ENCODE measurements at regions of chr3 and their contacts with region 1.

Region 1: GRCh38 chr3:170414202-170414663 is 4.4 kb upstream of the CLDN11 start:
- DNase-seq: peak; percentile 82
- H3K4me3 ChIP-seq: no peak overlapping the region
- H3K27ac ChIP-seq: no peak overlapping the region
- H3K27me3 ChIP-seq: no peaks in the 10 kb centered on the region
- CTCF ChIP-seq: peak; percentile 100

Region 2: GRCh38 chr3:169792359-169792758 is 621.9 kb before region 1 on chr3:
- CTCF ChIA-PET with region 1: interaction called, 10 read pairs
- POLR2A ChIA-PET with region 1: no interaction called
- DNase-seq: no peak
- H3K4me3 ChIP-seq: no peak overlapping the region
- H3K27ac ChIP-seq: no peak overlapping the region
- H3K27me3 ChIP-seq: no peaks in the 10 kb centered on the region
- CTCF ChIP-seq: no peak

Region 3: DNA sequence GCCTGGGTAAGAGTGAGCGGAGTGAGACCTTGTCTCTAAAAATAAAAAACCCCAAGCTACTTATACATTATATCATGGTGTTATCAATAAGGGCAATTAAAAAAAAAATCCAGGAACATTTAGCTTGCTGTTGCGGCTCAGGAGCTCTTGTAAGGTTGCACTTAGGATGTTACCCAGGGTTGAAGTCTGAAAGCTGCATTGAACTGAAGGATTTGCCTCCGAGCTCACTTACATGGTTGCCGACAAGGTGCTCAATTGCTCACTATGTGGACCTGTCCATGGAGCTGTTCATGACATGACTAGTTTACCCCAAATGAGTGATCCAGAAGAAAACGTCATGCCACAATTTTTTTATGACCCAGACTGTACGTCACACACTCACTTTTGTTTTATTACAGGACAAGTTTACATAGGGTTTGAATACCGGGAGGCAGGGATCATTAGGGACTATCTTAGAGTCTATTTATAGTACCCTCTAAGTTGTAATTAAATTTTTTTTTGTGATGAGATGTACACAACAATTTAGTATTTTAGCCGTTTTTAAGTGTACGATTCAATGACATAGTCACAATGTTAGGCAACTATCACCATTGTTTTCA is 16.6 kb before region 1 on chr3:
- CTCF ChIA-PET with region 1: interaction called, 10 read pairs
- POLR2A ChIA-PET with region 1: no interaction called
- DNase-seq: no peak
- H3K4me3 ChIP-seq: no peak overlapping the region
- H3K27ac ChIP-seq: no peak overlapping the region
- H3K27me3 ChIP-seq: no peaks in the 10 kb centered on the region
- CTCF ChIP-seq: no peak

Region 4: DNA sequence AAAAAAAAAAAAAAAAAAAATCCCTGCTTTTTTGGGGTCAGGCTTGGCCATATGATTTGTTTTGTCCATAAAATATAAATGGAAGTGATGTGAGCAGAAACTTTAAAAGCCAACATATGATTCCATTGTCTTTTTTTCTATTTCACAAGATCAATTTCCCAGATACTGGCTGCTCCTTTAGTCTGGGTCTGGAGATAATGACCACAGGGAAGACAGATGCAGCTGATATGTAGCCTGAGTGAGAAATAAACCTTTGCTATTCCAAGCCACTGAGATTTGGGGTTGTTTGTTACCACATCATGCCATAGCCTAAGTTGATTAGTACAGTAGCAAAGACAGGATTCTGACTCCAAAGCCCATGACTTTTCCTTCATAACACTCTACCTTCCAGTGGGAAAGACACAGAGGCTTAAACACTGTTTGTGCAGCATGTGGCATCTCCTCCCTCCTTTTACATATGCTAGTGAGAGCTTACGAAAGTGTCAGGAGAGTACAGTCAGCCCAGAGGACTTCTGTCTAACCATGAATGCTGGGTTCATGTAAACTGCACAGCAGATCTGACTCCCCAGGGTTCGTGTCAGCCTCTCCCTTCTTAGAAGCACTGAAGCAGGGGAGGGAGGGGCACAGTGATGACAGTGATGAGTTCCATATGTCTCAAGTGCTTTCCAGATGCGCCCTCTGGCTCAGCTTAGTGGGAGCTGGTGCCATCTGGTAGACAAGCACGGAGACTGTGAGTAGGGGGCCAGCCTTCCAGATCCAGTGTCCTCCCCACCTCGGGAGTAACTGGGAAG is 208.3 kb after region 1 on chr3:
- CTCF ChIA-PET with region 1: interaction called, 11 read pairs
- POLR2A ChIA-PET with region 1: interaction called, 4 read pairs
- DNase-seq: peak; percentile 98
- H3K4me3 ChIP-seq: no peak overlapping the region
- H3K27ac ChIP-seq: peak overlapping the region; percentile 86
- H3K27me3 ChIP-seq: no peaks in the 10 kb centered on the region
- CTCF ChIP-seq: no peak

Region 5: DNA sequence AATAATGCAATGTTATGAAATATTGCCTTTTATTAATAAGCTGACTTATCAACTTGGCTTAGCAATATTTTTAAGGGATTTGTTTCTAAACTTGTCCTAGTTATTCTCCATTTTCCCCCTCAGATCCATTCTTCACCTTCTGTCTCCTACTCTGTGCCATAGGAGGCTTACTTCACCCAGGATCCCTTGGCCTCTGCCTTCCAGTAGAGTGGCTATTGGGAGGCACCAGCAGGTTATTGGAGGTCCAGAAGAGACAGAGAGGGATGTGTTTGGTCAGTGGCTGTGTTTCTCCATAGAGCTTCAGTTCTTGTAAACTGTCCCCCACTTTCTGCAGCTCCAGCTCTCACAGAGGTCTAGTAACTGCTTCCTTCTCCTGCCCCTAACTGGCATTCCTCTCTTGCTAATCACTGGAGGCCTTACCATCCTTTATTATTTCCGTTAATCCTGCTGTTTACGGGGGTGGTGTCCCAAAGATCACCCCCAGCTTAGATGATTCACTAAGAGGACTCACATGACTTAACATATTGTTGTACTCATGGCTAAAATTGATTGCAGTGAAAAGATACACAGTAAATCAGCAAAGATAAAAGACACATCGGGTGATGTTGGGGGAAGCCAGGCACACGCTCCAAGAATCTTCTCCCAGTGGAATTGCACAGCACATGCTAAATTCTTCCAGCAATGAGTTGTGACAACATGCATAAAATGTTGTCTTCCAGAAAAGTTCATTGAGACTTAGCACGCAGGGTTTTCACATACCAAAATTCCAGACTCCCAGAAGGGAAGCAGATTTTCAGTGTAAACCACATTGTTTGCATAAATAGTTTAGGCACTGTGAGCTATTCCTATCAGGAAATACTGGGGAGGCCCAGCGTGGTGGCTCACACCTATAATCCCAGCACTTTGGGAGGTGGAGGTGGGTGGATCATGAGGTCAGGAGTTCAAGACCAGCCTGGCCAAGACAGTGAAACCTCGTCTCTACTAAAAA is 388.2 kb after region 1 on chr3:
- CTCF ChIA-PET with region 1: interaction called, 6 read pairs
- POLR2A ChIA-PET with region 1: interaction called, 17 read pairs
- DNase-seq: peak; percentile 95
- H3K4me3 ChIP-seq: no peak overlapping the region
- H3K27ac ChIP-seq: peak overlapping the region; percentile 91
- H3K27me3 ChIP-seq: no peaks in the 10 kb centered on the region
- CTCF ChIP-seq: no peak

Region 6: DNA sequence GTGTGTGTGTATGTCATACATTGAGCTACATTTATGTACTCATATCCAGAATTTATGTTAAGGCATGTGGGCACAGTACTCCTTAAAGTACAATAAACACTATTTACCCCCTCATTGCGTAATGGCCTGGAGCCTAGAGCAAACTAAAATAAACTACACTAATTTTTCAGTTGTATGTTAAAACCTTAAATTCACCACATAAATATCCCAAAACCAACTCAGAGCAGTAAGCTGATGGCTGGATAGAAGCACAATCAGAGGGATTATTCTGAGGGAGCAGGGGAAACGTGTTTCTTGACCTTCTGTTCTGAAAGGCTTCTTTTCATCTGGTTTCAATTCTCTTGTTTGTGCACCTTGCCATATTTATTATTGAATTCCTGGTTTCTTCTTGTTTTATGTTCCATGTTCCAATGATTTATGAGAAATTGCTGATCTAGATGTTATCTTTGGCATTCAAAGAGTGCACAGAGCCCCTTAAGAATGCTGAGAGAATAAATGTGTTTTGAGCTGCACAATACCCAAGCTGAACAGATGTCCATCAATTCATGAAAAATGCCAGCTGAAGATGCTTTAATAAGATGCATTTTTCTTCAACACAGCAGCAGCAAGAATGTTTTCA is 426.1 kb after region 1 on chr3:
- CTCF ChIA-PET with region 1: interaction called, 21 read pairs
- POLR2A ChIA-PET with region 1: no interaction called
- DNase-seq: no peak
- H3K4me3 ChIP-seq: no peak overlapping the region
- H3K27ac ChIP-seq: no peak overlapping the region
- H3K27me3 ChIP-seq: no peaks in the 10 kb centered on the region
- CTCF ChIP-seq: no peak

Region 7: GRCh38 chr3:171239757-171240503 is 825.7 kb after region 1 on chr3:
- CTCF ChIA-PET with region 1: no interaction called
- POLR2A ChIA-PET with region 1: no interaction called
- DNase-seq: no peak
- H3K4me3 ChIP-seq: no peak overlapping the region
- H3K27ac ChIP-seq: no peak overlapping the region
- H3K27me3 ChIP-seq: no peaks in the 10 kb centered on the region
- CTCF ChIP-seq: no peak

Measured in AG04450 (cell line).